ENCODE measurements at regions of chr5 and their contacts with region 1.

Region 1: GRCh38 chr5:132820162-132820754 is 7.2 kb downstream of the SOWAHA start:
- H3K4me3 ChIP-seq: no peak overlapping the region
- H3K27ac ChIP-seq: no peak overlapping the region
- H3K4me1 ChIP-seq: peaks cover 6% of the 10 kb centered on the region
- CTCF ChIP-seq: peak; percentile 83

Region 2: GRCh38 chr5:132301344-132302271 is 518.6 kb before region 1 on chr5:
- CTCF ChIA-PET with region 1: no interaction called
- POLR2A ChIA-PET with region 1: no interaction called
- H3K4me3 ChIP-seq: no peak overlapping the region
- H3K27ac ChIP-seq: no peak overlapping the region
- H3K4me1 ChIP-seq: no peaks in the 10 kb centered on the region
- CTCF ChIP-seq: no peak

Region 3: DNA sequence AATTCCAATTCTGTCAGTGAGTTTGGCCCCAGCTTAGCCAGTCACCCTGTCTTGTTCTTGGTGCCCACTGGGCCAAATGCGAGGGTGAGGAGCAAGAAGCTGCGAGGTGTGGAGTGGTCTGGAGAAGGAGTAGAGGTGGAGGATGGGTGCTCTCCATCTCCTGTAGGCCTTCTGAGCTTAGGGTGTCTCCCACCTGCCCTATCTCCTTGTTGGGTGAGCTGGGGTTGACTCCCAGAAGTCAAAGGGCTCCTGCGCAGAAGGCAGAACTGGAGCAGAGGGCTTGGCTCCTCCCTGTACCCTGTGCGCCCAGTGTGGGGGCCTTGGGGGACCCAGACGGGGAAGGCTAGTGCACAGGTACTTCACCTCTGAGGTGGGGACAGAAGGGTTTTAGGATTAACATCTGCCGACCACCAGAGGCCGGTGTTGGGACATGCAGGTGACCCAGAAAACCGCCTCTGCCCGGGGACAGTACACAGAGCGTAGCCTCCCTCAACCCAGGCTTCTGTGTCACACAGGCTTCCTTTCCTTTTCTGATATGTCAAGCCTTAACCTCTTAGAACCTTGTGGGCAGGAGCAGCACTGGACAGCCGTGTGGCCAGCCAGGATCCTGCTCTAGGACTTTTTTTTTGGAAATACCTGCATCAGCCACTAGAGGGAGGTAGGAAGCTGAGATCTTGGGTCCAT is 293.8 kb before region 1 on chr5:
- CTCF ChIA-PET with region 1: interaction called, 46 read pairs
- POLR2A ChIA-PET with region 1: interaction called, 3 read pairs
- H3K4me3 ChIP-seq: peak overlapping the region; percentile 32
- H3K27ac ChIP-seq: no peak overlapping the region
- H3K4me1 ChIP-seq: no peaks in the 10 kb centered on the region
- CTCF ChIP-seq: peak; percentile 91

Region 4: GRCh38 chr5:132736853-132737833 is 83.1 kb before region 1 on chr5 and contains the start of gene KIF3A:
- CTCF ChIA-PET with region 1: interaction called, 3 read pairs
- POLR2A ChIA-PET with region 1: interaction called, 12 read pairs
- H3K4me3 ChIP-seq: peak within 1 kb of the TSS; percentile 76
- H3K27ac ChIP-seq: peak within 1 kb of the TSS; percentile 53; the same call in 1 of the 2 replicates
- H3K4me1 ChIP-seq: no peaks in the 10 kb centered on the region; the same call in 1 of the 2 replicates
- CTCF ChIP-seq: peak; percentile 38; the same call in 1 of the 2 replicates

Region 5: GRCh38 chr5:132746954-132747615 is 73.2 kb before region 1 on chr5 and contains the start of gene CCNI2:
- CTCF ChIA-PET with region 1: interaction called, 58 read pairs
- POLR2A ChIA-PET with region 1: interaction called, 3 read pairs
- H3K4me3 ChIP-seq: peak within 1 kb of the TSS; percentile 31
- H3K27ac ChIP-seq: no peak within 1 kb of the TSS; the same call in 1 of the 2 replicates
- H3K4me1 ChIP-seq: no peaks in the 10 kb centered on the region
- CTCF ChIP-seq: peak; percentile 52

Region 6: GRCh38 chr5:132753135-132753987 is 66.9 kb before region 1 on chr5:
- CTCF ChIA-PET with region 1: interaction called, 58 read pairs
- POLR2A ChIA-PET with region 1: interaction called, 4 read pairs
- H3K4me3 ChIP-seq: no peak overlapping the region
- H3K27ac ChIP-seq: no peak overlapping the region
- H3K4me1 ChIP-seq: no peaks in the 10 kb centered on the region
- CTCF ChIP-seq: no peak

Region 7: GRCh38 chr5:132797651-132798050 is 22.6 kb before region 1 on chr5:
- CTCF ChIA-PET with region 1: interaction called, 11 read pairs
- POLR2A ChIA-PET with region 1: no interaction called
- H3K4me3 ChIP-seq: no peak overlapping the region
- H3K27ac ChIP-seq: no peak overlapping the region
- H3K4me1 ChIP-seq: no peaks in the 10 kb centered on the region
- CTCF ChIP-seq: no peak

Region 8: DNA sequence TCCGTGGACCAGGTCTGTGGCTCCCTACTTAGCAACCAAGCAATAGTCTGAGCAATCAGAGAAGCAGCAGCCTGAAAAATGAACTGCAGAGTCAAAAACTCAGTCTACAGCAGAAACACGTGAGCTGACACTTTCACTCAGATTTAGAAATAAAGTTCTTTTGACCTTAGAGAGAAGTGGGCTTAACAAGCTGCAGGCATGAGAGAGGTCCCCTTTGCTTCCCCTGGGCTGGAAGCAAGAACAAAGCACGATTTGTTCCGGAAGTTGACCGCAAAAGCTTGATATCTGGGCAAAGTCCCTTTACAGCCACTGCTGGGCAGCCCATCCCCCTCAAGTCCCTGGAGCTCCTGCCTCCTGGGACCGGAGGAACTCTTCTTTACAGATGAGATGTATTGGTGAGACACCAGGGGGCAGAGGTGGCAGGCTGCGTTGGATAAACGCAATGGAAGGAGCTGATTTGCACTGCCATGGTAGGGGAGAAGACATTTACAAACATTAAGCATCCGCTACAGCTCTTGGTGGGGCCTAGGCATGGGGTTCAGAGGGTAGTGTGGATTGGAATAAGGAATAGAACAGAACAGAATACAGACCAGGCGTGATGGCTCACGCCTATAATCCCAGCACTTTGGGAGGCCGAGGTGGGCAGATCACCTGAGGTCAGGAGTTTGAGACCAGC is 13.0 kb before region 1 on chr5:
- CTCF ChIA-PET with region 1: interaction called, 36 read pairs
- POLR2A ChIA-PET with region 1: interaction called, 5 read pairs
- H3K4me3 ChIP-seq: no peak overlapping the region
- H3K27ac ChIP-seq: no peak overlapping the region
- H3K4me1 ChIP-seq: 0 out of 2 replicates have a peak, but pooled peaks cover 1% of the 10 kb centered on the region
- CTCF ChIP-seq: peak; percentile 65

Measured in HEK293 (cell line).